ENCODE measurements at regions of chr9 and their contacts with region 1.

Region 1: GRCh38 chr9:121650217-121651007 is 1.0 kb upstream of the DAB2IP start:
- DNase-seq: peak; percentile 65 to 87 (median 84)
- H3K4me3 ChIP-seq: peak overlapping the region in 2 of 7 experiments; percentile 11 to 33
- H3K27ac ChIP-seq: no peak overlapping the region
- H3K4me1 ChIP-seq: peaks cover 2 to 54% (median 46%) of the 10 kb centered on the region in 4 experiments
- H3K27me3 ChIP-seq: peaks cover 0 to 45% (median 12%) of the 10 kb centered on the region in 5 experiments

Region 2: DNA sequence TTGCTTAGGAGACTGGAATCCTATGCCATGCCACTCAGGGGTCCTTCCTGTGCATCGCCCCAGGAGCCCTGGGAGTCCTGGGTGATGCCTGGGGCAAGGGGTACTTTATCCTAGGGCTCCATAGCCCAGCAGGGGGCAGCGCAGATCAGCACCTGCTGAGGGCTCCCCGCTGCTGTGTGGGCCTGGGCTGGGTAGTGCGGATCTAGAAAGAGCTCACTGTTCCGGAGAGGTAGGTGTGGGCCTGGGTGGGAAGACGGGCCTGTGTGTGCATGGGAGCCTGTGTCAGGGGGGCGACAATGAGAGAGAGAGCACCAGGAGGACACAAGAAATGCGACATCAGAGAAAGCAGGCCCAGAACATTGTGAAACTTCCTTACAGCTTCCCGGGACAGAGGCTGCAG is 10.3 kb before region 1 on chr9:
- CTCF ChIA-PET with region 1: interaction called, 12 read pairs
- POLR2A ChIA-PET with region 1: no interaction called
- DNase-seq: peak in 2 of 3 donors; percentile 59 to 62
- H3K4me3 ChIP-seq: no peak overlapping the region
- H3K27ac ChIP-seq: no peak overlapping the region
- H3K4me1 ChIP-seq: peaks cover 0 to 39% (median 35%) of the 10 kb centered on the region in 4 experiments
- H3K27me3 ChIP-seq: no peaks in the 10 kb centered on the region

Region 3: DNA sequence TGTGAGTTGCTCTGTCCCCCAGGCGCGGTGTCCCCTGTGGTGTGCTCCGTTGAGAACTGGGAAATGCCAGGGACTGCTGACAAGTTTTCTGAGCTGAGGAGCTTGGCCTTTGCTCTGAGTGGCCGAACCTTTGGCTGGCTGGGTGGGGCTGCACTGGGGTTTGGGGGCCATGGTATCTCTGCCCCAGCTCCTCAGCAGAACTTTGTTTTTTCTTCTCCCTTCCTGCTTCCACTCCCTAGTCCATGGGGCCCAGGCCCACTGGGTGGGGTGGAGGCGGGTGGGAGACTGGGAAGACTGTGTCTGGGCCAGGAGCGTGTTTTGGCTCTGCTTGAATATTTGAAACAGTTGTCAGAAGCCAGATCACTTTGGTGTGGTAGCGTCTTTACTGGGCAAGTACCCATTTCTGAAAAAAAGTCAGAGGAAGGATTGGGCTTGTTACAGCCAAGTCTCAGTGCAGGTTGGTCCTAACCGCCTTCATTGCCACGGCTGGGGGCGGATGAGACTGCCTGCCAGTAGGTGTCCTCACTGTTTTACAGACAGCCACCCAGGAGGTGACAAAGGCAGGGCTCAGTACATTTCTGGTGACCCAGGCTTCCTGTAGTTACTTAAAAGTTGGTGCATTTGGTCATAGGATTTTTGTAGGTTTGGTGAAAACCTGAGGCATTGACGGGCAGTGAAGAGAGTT is 93.7 kb after region 1 on chr9:
- CTCF ChIA-PET with region 1: no interaction called
- POLR2A ChIA-PET with region 1: no interaction called
- DNase-seq: peak; percentile 37 to 56 (median 54)
- H3K4me3 ChIP-seq: no peak overlapping the region
- H3K27ac ChIP-seq: no peak overlapping the region
- H3K4me1 ChIP-seq: no peaks in the 10 kb centered on the region
- H3K27me3 ChIP-seq: peaks cover 0 to 10% (median 0%) of the 10 kb centered on the region in 5 experiments